Activated T-helper 1 cell treated with anti-CD3 and anti-CD28 coated beads, Interleukin-12 subunit alpha, Interleukin-12 subunit beta, Interleukin-2, Interleukin-4 antibody, amounts not matched to agents 30 ng/mL and 10 ng/mL and 1 ng/mL, durations not matched to agents 14 hours and 24 hours and 36 hours (primary cell): ENCODE measurements at regions of chr6 and their contacts with region 1.

Region 1: GRCh38 chr6:35920793-35921732 is at the start of gene SRPK1:
- DNase-seq: peak; percentile 85
- H3K4me3 Mint-ChIP-seq: peak within 1 kb of the TSS; percentile 96
- H3K27ac Mint-ChIP-seq: peak within 1 kb of the TSS; percentile 93
- H3K4me1 Mint-ChIP-seq: peaks cover 49% of the 10 kb centered on the region
- H3K27me3 Mint-ChIP-seq: no peaks in the 10 kb centered on the region
- total RNA-seq, gene SRPK1: 149 and 182 TPM in 2 replicates

Region 2: GRCh38 chr6:35804996-35805736 is 115.9 kb before region 1 on chr6 and contains the start of gene LHFPL5:
- intact Hi-C with region 1: loop called (anchors 1 kb)
- DNase-seq: peak; percentile 62
- H3K4me3 Mint-ChIP-seq: no peak within 1 kb of the TSS
- H3K27ac Mint-ChIP-seq: no peak within 1 kb of the TSS
- H3K4me1 Mint-ChIP-seq: no peaks in the 10 kb centered on the region
- H3K27me3 Mint-ChIP-seq: peaks cover 3% of the 10 kb centered on the region
- total RNA-seq, gene LHFPL5: not detected in 2 replicates

Region 3: GRCh38 chr6:35893246-35893645 is 27.8 kb before region 1 on chr6:
- intact Hi-C with region 1: loop called (anchors 5 kb)
- DNase-seq: no peak
- H3K4me3 Mint-ChIP-seq: no peak overlapping the region
- H3K27ac Mint-ChIP-seq: no peak overlapping the region
- H3K4me1 Mint-ChIP-seq: peaks cover 19% of the 10 kb centered on the region
- H3K27me3 Mint-ChIP-seq: no peaks in the 10 kb centered on the region

Region 4: GRCh38 chr6:36094753-36095496 is 173.9 kb after region 1 on chr6:
- intact Hi-C with region 1: loop called (anchors 1 kb)
- DNase-seq: peak; percentile 67
- H3K4me3 Mint-ChIP-seq: no peak overlapping the region
- H3K27ac Mint-ChIP-seq: peak overlapping the region; percentile 47
- H3K4me1 Mint-ChIP-seq: peaks cover 30% of the 10 kb centered on the region
- H3K27me3 Mint-ChIP-seq: no peaks in the 10 kb centered on the region